B cell (primary cell): ENCODE measurements at regions of chr10 and their contacts with region 1.

Region 1: DNA sequence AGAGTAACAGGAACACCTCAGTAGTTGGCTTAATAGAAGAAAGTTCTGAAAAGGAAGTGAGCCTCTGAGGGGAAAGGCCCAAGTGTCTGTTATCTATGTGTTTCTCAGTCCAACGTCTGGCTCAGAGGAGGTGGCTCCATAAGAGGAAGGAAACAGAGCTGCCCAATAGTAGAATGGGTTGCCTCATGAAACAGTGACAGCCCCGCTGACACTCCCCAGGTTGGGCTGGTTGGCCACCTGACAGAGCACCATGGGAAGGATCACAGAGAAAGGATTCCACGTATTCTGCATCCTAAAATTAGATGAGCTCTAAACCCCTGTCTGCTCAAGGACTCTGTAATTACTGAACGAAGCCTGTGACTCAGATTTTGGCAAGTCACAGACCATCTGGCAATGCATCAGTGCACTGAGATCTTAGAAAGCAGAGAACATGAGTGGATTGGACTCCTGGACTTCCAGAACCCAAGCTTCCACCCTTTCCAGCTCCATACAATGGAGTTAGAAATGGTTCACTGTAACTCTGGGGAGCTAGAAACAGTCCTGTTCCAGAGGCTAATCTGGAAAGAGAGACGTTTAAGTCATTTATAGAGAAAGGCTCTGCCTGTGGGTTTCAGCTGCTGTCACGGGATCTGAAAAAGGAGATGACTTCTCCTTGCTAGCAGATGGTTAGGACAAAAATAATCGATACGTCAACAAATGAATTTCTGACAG is 2.9 kb downstream of the PKD2L1 start:
- DNase-seq: peak; percentile 90
- ATAC-seq: peak; percentile 100
- H3K4me3 ChIP-seq: peak overlapping the region in 2 of 5 experiments; percentile 19 to 28
- H3K4me3 Mint-ChIP-seq: peak overlapping the region; percentile 60
- H3K27ac ChIP-seq: peak overlapping the region; percentile 77 to 92
- H3K27ac Mint-ChIP-seq: peak overlapping the region; percentile 91
- H3K4me1 ChIP-seq: peaks cover 22 to 23% of the 10 kb centered on the region in 2 donors
- H3K4me1 Mint-ChIP-seq: peaks cover 29% of the 10 kb centered on the region
- H3K27me3 ChIP-seq: peaks cover 0 to 3% (median 0%) of the 10 kb centered on the region in 4 experiments
- H3K27me3 Mint-ChIP-seq: peaks cover 15% of the 10 kb centered on the region
- CTCF ChIP-seq: no peak

Region 2: GRCh38 chr10:99421233-99421739 is 905.9 kb before region 1 on chr10:
- CTCF ChIA-PET with region 1: no interaction called
- POLR2A ChIA-PET with region 1: no interaction called
- intact Hi-C with region 1: no loop called
- DNase-seq: no peak
- ATAC-seq: no peak
- H3K4me3 ChIP-seq: no peak overlapping the region
- H3K4me3 Mint-ChIP-seq: no peak overlapping the region
- H3K27ac ChIP-seq: no peak overlapping the region
- H3K27ac Mint-ChIP-seq: no peak overlapping the region
- H3K4me1 ChIP-seq: no peaks in the 10 kb centered on the region
- H3K4me1 Mint-ChIP-seq: peaks cover under 1% of the 10 kb centered on the region
- H3K27me3 ChIP-seq: no peaks in the 10 kb centered on the region
- H3K27me3 Mint-ChIP-seq: no peaks in the 10 kb centered on the region
- CTCF ChIP-seq: no peak

Region 3: DNA sequence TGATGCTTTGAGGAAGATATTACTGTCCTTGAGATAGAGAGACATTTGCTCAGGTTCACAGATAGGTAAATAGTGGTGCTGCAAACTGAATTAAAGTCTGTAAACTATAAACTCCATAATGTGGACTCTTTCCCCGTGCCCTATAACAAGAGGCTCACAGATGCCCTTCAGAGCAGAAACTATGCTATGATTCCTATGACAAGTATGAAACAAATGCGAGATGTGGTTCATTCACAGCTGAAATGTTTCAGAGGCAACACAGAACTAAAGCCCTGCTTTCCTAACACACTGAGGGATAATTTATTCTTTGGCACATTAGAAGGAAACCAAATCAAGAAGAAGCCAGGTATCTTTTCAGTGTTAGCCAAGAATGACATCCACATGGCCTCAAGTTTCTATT is 111.2 kb before region 1 on chr10:
- CTCF ChIA-PET with region 1: no interaction called
- POLR2A ChIA-PET with region 1: no interaction called
- intact Hi-C with region 1: no loop called
- DNase-seq: no peak
- ATAC-seq: no peak
- H3K4me3 ChIP-seq: no peak overlapping the region
- H3K4me3 Mint-ChIP-seq: no peak overlapping the region
- H3K27ac ChIP-seq: no peak overlapping the region
- H3K27ac Mint-ChIP-seq: no peak overlapping the region
- H3K4me1 ChIP-seq: no peaks in the 10 kb centered on the region
- H3K4me1 Mint-ChIP-seq: no peaks in the 10 kb centered on the region
- H3K27me3 ChIP-seq: no peaks in the 10 kb centered on the region
- H3K27me3 Mint-ChIP-seq: no peaks in the 10 kb centered on the region
- CTCF ChIP-seq: no peak

Region 4: DNA sequence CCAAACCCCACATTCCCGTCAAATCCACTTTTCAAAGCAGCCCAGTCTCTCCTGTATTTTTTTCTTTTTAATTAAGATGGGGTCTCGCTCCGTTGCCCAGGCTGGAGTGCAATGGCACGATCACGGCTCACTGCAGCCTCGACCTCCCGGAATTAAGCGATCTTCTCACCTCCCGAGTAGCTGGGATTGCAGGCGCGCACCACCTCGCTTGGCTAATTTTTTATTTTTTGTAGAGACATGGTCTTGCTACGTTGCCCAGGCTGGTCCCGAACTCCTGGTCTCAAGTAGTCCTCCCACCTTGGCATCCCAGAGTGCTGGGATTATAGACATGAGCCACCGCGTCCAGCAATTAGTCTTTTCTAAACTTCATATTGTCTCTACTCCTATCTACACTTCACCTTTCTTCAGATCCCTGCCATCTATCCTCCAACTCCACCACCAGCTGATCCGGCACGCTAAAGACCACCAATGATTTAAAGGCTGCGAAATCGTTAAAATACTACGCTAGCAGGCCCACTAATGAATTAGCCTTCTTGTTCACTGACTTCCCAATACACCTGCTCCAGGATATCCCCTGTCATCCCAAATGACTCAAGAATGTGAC is 97.2 kb before region 1 on chr10:
- CTCF ChIA-PET with region 1: no interaction called
- POLR2A ChIA-PET with region 1: no interaction called
- intact Hi-C with region 1: loop called (anchors 1 kb)
- DNase-seq: peak; percentile 12
- ATAC-seq: no peak
- H3K4me3 ChIP-seq: peak overlapping the region; percentile 81 to 98 (median 88)
- H3K4me3 Mint-ChIP-seq: peak overlapping the region; percentile 96
- H3K27ac ChIP-seq: peak overlapping the region; percentile 71 to 87
- H3K27ac Mint-ChIP-seq: peak overlapping the region; percentile 90
- H3K4me1 ChIP-seq: peaks cover 9 to 26% of the 10 kb centered on the region in 2 donors
- H3K4me1 Mint-ChIP-seq: peaks cover 26% of the 10 kb centered on the region
- H3K27me3 ChIP-seq: no peaks in the 10 kb centered on the region
- H3K27me3 Mint-ChIP-seq: no peaks in the 10 kb centered on the region
- CTCF ChIP-seq: no peak

Region 5: DNA sequence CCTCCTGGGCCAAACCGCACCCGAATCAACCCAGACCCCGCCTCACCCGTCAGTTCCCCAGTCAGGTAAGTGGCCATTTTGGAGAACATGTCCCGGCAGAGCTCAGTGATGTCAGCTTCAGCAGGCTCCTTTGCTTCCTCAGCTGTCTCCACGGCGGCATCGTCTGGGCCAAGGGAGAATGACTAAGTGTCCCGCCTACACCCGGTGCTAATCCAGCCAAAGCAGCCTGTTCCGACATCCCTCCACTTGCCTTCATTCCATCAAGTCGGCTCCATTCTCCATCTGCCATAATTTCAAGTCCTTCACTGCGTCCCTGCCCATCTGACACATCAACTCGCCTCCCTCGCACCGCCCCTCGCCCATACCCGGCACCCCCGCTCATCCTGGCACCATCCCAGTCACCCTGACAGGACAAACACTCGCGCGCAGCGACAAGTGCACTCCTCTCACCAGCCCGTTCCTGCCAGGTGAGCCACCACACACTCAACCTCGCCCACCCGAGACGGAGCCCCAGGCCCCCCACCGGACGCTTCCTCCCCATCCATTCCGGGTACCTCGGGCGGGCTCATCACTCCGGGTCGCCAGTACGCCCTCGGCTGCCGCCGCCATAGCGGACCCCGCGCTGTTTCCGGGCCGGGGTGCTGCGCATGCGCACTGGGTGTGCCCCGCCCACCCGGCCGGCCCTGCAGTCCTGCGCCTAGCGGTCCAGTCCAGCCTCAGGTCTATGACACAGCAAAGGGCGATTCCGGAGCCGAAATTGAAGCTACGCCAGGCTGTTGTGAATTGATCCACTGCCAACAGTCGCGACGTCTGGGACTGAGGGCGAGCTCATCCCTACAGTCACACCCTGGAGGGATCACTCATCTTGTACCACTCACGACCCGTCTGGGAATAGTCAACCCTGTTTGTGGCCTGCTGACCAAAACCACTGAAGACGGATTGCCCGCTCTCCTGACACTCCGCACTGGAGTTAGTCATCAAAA is 40.8 kb before region 1 on chr10 and contains the start of gene BLOC1S2:
- CTCF ChIA-PET with region 1: interaction called, 6 read pairs
- POLR2A ChIA-PET with region 1: interaction called, 8 read pairs
- intact Hi-C with region 1: loop called (anchors 1 kb)
- DNase-seq: peak; percentile 91
- ATAC-seq: peak; percentile 90
- H3K4me3 ChIP-seq: peak within 1 kb of the TSS; percentile 69 to 100 (median 99)
- H3K4me3 Mint-ChIP-seq: peak within 1 kb of the TSS; percentile 98
- H3K27ac ChIP-seq: peak within 1 kb of the TSS; percentile 92 to 96
- H3K27ac Mint-ChIP-seq: peak within 1 kb of the TSS; percentile 96
- H3K4me1 ChIP-seq: peaks cover 48 to 53% of the 10 kb centered on the region in 2 donors
- H3K4me1 Mint-ChIP-seq: peaks cover 35% of the 10 kb centered on the region
- H3K27me3 ChIP-seq: no peaks in the 10 kb centered on the region
- H3K27me3 Mint-ChIP-seq: peaks cover 1% of the 10 kb centered on the region
- CTCF ChIP-seq: no peak
- total RNA-seq, gene BLOC1S2: 47.2 and 47.5 TPM in 2 replicates

Region 6: GRCh38 chr10:100303724-100304319 is 23.3 kb before region 1 on chr10:
- CTCF ChIA-PET with region 1: interaction called, 4 read pairs
- POLR2A ChIA-PET with region 1: no interaction called
- intact Hi-C with region 1: loop called (anchors 2 kb)
- DNase-seq: peak; percentile 42
- ATAC-seq: no peak
- H3K4me3 ChIP-seq: no peak overlapping the region
- H3K4me3 Mint-ChIP-seq: no peak overlapping the region
- H3K27ac ChIP-seq: no peak overlapping the region
- H3K27ac Mint-ChIP-seq: no peak overlapping the region
- H3K4me1 ChIP-seq: peaks cover 0 to 3% of the 10 kb centered on the region in 2 donors
- H3K4me1 Mint-ChIP-seq: no peaks in the 10 kb centered on the region
- H3K27me3 ChIP-seq: peaks cover 0 to 5% (median 0%) of the 10 kb centered on the region in 4 experiments
- H3K27me3 Mint-ChIP-seq: peaks cover 47% of the 10 kb centered on the region
- CTCF ChIP-seq: peak; percentile 70

Region 7: GRCh38 chr10:100338434-100339036 is 11.4 kb after region 1 on chr10:
- CTCF ChIA-PET with region 1: interaction called, 37 read pairs
- POLR2A ChIA-PET with region 1: no interaction called
- intact Hi-C with region 1: loop called (anchors 1 kb)
- DNase-seq: peak; percentile 83
- ATAC-seq: peak; percentile 78
- H3K4me3 ChIP-seq: peak overlapping the region in 1 of 5 experiments; percentile 19
- H3K4me3 Mint-ChIP-seq: peak overlapping the region; percentile 72
- H3K27ac ChIP-seq: peak overlapping the region; percentile 38 to 49
- H3K27ac Mint-ChIP-seq: peak overlapping the region; percentile 67
- H3K4me1 ChIP-seq: peaks cover 20 to 24% of the 10 kb centered on the region in 2 donors
- H3K4me1 Mint-ChIP-seq: peaks cover 26% of the 10 kb centered on the region
- H3K27me3 ChIP-seq: peaks cover 0 to 6% (median 0%) of the 10 kb centered on the region in 4 experiments
- H3K27me3 Mint-ChIP-seq: peaks cover 11% of the 10 kb centered on the region
- CTCF ChIP-seq: peak; percentile 96

Region 8: GRCh38 chr10:100346765-100347567 is 19.8 kb after region 1 on chr10 and contains the start of gene SCD:
- CTCF ChIA-PET with region 1: interaction called, 8 read pairs
- POLR2A ChIA-PET with region 1: interaction called, 4 read pairs
- intact Hi-C with region 1: loop called (anchors 2 kb)
- DNase-seq: peak; percentile 92
- ATAC-seq: peak; percentile 95
- H3K4me3 ChIP-seq: peak within 1 kb of the TSS; percentile 62 to 74 (median 72)
- H3K4me3 Mint-ChIP-seq: peak within 1 kb of the TSS; percentile 91
- H3K27ac ChIP-seq: peak within 1 kb of the TSS; percentile 64 to 85
- H3K27ac Mint-ChIP-seq: peak within 1 kb of the TSS; percentile 78
- H3K4me1 ChIP-seq: peaks cover 14 to 23% of the 10 kb centered on the region in 2 donors
- H3K4me1 Mint-ChIP-seq: peaks cover 22% of the 10 kb centered on the region
- H3K27me3 ChIP-seq: peaks cover 0 to 8% (median 0%) of the 10 kb centered on the region in 4 experiments
- H3K27me3 Mint-ChIP-seq: no peaks in the 10 kb centered on the region
- CTCF ChIP-seq: no peak
- total RNA-seq, gene SCD: 5.1 and 5.6 TPM in 2 replicates